GM12878 (cell line): ENCODE measurements at regions of chr6 and their contacts with region 1.

Region 1: GRCh38 chr6:113447088-113447831 is 409.9 kb upstream of the MARCKS start:
- DNase-seq: no peak
- ATAC-seq: no peak
- H3K4me3 ChIP-seq: no peak overlapping the region
- H3K27ac ChIP-seq: no peak overlapping the region
- H3K4me1 ChIP-seq: no peaks in the 10 kb centered on the region
- H3K27me3 ChIP-seq: no peaks in the 10 kb centered on the region
- CTCF ChIP-seq: no peak
- EP300 ChIP-seq: no peak
- POLR2A ChIP-seq: no peak
- RAD21 ChIP-seq: no peak

Region 2: GRCh38 chr6:112990971-112991370 is 456.3 kb before region 1 on chr6:
- CTCF ChIA-PET with region 1: no interaction called
- POLR2A ChIA-PET with region 1: no interaction called
- RAD21 ChIA-PET with region 1: no interaction called
- SMC1A ChIA-PET with region 1: no interaction called
- in situ Hi-C with region 1: no loop called
- intact Hi-C with region 1: no loop called
- DNase-seq: no peak
- ATAC-seq: no peak
- H3K4me3 ChIP-seq: no peak overlapping the region
- H3K27ac ChIP-seq: no peak overlapping the region
- H3K4me1 ChIP-seq: no peaks in the 10 kb centered on the region
- H3K27me3 ChIP-seq: no peaks in the 10 kb centered on the region
- CTCF ChIP-seq: no peak
- EP300 ChIP-seq: no peak
- POLR2A ChIP-seq: no peak
- RAD21 ChIP-seq: no peak

Region 3: DNA sequence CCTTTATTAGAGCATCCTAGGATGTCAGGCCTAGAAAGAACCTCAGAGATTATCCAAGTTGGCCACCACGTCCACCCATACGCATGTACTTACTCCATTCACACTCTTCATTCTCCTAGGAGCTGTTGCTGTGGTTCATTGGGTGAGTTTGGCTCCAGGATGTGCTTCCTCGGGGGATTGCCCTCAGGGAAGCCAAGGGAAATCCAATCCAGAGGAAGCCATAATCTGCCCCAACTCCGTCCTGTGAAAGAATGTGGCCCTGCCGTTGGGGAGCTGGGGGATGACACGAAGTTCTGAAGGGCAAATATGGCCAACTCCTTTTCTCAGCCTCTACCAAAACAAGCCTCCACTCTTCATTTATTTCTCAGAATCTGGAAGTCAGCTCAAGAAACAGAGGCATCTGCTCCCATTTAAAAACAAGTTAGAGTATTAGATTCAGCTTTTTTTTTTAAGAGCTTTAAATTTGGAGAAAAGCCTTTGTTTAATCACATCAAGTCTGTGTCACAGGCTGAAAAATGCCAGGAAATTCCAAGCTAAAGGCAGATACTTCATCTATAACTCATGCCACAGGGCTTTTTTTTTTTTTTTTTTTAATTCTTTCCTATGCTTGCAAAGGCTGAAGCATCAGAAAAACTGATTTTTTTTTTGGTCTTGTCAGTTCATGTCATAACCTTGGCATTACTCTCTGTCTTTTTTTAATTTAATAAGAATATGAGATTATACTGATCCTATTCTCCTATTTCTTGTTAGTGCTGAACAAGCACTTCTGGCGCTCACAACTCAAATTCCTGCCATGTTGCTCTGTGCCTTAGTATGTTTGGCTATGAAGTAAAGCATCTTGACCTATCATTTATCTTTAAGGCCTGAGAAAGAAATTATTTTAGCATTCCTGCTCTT is 71.1 kb before region 1 on chr6:
- CTCF ChIA-PET with region 1: no interaction called
- POLR2A ChIA-PET with region 1: no interaction called
- RAD21 ChIA-PET with region 1: no interaction called
- SMC1A ChIA-PET with region 1: no interaction called
- in situ Hi-C with region 1: no loop called
- intact Hi-C with region 1: no loop called
- DNase-seq: no peak
- ATAC-seq: no peak
- H3K4me3 ChIP-seq: no peak overlapping the region
- H3K27ac ChIP-seq: no peak overlapping the region
- H3K4me1 ChIP-seq: no peaks in the 10 kb centered on the region
- H3K27me3 ChIP-seq: no peaks in the 10 kb centered on the region
- CTCF ChIP-seq: no peak
- EP300 ChIP-seq: no peak
- POLR2A ChIP-seq: no peak
- RAD21 ChIP-seq: no peak

Region 4: DNA sequence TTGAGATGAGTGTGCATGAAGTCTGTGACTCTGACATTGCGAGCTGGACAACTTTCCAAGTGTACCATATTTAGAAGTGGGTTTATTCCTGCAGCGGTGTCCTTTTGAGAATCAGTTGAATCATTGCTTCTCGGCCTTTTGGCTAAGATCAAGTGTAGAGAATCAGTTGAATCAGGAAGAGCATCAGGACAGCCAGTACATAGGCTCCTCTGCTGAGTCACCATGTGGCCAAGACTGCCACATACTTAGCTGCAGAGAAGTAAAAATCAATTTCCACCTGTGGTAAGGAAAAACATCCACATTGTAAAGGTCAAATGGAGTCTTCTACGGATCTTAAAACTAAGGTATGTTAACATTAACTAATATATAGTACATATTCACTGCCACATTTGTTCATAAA is 18.6 kb before region 1 on chr6:
- CTCF ChIA-PET with region 1: no interaction called
- POLR2A ChIA-PET with region 1: no interaction called
- RAD21 ChIA-PET with region 1: no interaction called
- SMC1A ChIA-PET with region 1: no interaction called
- in situ Hi-C with region 1: no loop called
- intact Hi-C with region 1: no loop called
- DNase-seq: no peak
- ATAC-seq: no peak
- H3K4me3 ChIP-seq: no peak overlapping the region
- H3K27ac ChIP-seq: no peak overlapping the region
- H3K4me1 ChIP-seq: no peaks in the 10 kb centered on the region
- H3K27me3 ChIP-seq: no peaks in the 10 kb centered on the region
- CTCF ChIP-seq: no peak
- EP300 ChIP-seq: no peak
- POLR2A ChIP-seq: no peak
- RAD21 ChIP-seq: no peak

Region 5: GRCh38 chr6:113458368-113459010 is 11.2 kb after region 1 on chr6:
- CTCF ChIA-PET with region 1: interaction called, 7 read pairs
- POLR2A ChIA-PET with region 1: interaction called, 3 read pairs
- RAD21 ChIA-PET with region 1: no interaction called
- SMC1A ChIA-PET with region 1: interaction called, 14 read pairs
- in situ Hi-C with region 1: no loop called
- intact Hi-C with region 1: no loop called
- DNase-seq: no peak
- ATAC-seq: no peak
- H3K4me3 ChIP-seq: no peak overlapping the region
- H3K27ac ChIP-seq: no peak overlapping the region
- H3K4me1 ChIP-seq: no peaks in the 10 kb centered on the region
- H3K27me3 ChIP-seq: no peaks in the 10 kb centered on the region
- CTCF ChIP-seq: no peak
- EP300 ChIP-seq: no peak
- POLR2A ChIP-seq: no peak
- RAD21 ChIP-seq: no peak